ENCODE measurements at regions of chr4 and their contacts with region 1.

Region 1: GRCh38 chr4:10164877-10165283 is 48.3 kb upstream of the WDR1 start:
- DNase-seq: no peak
- ATAC-seq: no peak
- H3K4me3 ChIP-seq: no peak overlapping the region
- H3K27ac ChIP-seq: no peak overlapping the region
- H3K4me1 ChIP-seq: no peaks in the 10 kb centered on the region
- H3K27me3 ChIP-seq: no peaks in the 10 kb centered on the region
- CTCF ChIP-seq: peak; percentile 63

Region 2: GRCh38 chr4:10403633-10404445 is 239.0 kb after region 1 on chr4:
- intact Hi-C with region 1: loop called (anchors 5 kb)
- DNase-seq: no peak
- ATAC-seq: peak in 1 of 2 donors; percentile 40
- H3K4me3 ChIP-seq: no peak overlapping the region
- H3K27ac ChIP-seq: no peak overlapping the region
- H3K4me1 ChIP-seq: no peaks in the 10 kb centered on the region
- H3K27me3 ChIP-seq: no peaks in the 10 kb centered on the region
- CTCF ChIP-seq: peak; percentile 52